PC-9 (cell line): ENCODE measurements at regions of chr12 and their contacts with region 1.

Region 1: GRCh38 chr12:12890815-12891645 is at the start of gene GPRC5A:
- DNase-seq: peak; percentile 96 to 100
- H3K4me3 ChIP-seq: peak within 1 kb of the TSS; percentile 86
- H3K27ac ChIP-seq: peak within 1 kb of the TSS; percentile 93
- H3K4me1 ChIP-seq: peaks cover 44% of the 10 kb centered on the region
- H3K27me3 ChIP-seq: no peaks in the 10 kb centered on the region
- CTCF ChIP-seq: no peak; the same call in 1 of the 2 replicates
- total RNA-seq, gene GPRC5A: 468 and 642 TPM in 2 replicates

Region 2: DNA sequence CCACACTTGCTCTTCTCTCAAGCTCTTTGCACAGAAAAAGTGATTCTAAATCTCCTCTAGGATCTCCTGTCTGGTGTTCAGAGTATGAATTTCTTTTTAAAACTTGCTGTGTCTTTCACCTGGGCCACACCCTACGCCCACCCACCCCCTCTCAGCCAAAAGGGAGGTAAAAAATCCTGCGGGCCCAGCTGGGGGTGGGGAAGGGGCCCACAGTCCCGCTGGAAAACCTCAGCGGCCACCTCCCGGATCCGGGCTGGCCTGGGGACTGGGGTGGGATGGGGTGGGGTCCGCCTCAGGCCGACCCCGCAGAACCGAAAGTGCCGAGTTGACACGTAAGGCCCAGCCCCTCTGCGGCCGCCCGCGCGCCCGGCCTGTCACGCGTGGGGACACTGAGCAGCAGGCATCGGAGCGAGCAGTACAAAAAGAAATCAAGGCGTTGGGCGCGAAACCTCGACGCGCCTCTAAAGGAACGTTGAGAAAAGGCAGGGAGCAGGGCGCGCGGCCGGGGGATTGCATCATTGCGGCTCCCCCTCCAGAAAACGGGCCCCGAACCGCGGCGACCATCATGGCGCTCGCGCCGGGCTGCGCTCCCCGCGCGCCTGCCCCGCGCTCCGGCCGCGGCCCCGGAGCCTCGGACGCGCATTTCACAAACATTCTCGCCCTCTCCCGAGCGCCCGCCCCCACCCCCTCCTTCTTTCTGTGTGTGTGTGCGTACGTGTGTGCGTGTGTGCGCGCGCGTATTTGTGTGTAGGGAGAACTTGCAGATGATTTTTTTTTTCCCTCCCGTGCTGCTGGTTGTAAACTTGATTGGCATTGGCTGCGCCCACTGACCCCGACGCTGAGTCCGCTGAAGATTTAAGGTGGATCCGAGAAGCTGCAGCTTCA is 166.1 kb before region 1 on chr12:
- CTCF ChIA-PET with region 1: interaction called, 3 read pairs
- POLR2A ChIA-PET with region 1: interaction called, 6 read pairs
- intact Hi-C with region 1: loop called (anchors 2 kb)
- DNase-seq: peak in 1 of 2 experiments; percentile 96
- H3K4me3 ChIP-seq: peak overlapping the region; percentile 96
- H3K27ac ChIP-seq: peak overlapping the region; percentile 98
- H3K4me1 ChIP-seq: peaks cover 31% of the 10 kb centered on the region
- H3K27me3 ChIP-seq: no peaks in the 10 kb centered on the region
- CTCF ChIP-seq: no peak

Region 3: DNA sequence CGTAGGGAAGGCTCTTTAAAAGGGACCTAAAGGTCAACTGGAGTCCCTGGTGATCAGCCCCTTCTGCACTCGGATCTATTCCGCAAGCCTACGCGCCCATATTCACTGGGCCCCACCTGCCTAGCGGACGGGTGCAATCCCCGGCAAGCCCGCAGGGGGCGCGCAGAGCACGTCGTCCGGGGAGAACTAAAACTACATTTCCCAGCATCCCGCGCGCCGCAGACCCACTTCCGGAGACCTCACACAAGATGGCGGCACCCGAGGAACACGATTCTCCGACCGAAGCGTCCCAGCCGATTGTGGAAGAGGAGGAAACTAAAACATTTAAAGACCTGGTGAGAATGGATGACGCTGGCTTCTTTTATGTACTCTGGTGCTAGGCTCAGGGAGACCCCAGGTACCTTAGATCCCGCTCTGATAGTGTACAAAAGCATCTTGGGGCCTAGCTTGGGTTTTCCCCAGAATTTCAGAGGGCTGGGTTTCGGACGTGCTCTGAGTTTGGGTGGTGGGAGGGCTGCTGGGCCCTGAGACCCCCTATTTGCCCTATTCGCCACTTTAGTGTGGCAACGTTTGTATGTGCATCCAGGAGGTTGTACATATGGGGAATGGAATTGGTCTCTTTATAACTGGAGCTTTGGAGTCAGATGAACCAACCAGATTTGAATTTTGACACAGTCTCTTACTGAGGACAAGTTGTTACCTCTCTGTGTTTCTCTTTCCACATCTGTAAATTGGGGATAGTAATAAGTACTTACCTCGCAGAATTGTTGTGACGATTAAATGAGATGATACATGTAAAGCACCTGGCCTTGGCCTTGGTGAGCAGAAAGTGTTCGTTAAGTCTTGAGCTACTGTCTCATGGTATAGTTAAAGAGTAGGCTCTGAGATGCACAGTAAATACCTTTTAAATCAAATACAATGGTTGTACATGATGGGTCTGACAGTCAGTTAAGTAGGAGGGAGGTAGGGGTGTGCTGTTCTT is 77.6 kb before region 1 on chr12 and contains the start of gene DDX47:
- CTCF ChIA-PET with region 1: interaction called, 9 read pairs
- POLR2A ChIA-PET with region 1: interaction called, 8 read pairs
- intact Hi-C with region 1: loop called (anchors 1 kb)
- DNase-seq: peak; percentile 81 to 98
- H3K4me3 ChIP-seq: peak within 1 kb of the TSS; percentile 67
- H3K27ac ChIP-seq: peak within 1 kb of the TSS; percentile 81
- H3K4me1 ChIP-seq: peaks cover 64% of the 10 kb centered on the region
- H3K27me3 ChIP-seq: no peaks in the 10 kb centered on the region
- CTCF ChIP-seq: peak; percentile 93
- total RNA-seq, gene DDX47: 192 and 196 TPM in 2 replicates

Region 4: GRCh38 chr12:12837025-12837872 is 53.8 kb before region 1 on chr12:
- CTCF ChIA-PET with region 1: interaction called, 21 read pairs
- POLR2A ChIA-PET with region 1: interaction called, 103 read pairs
- intact Hi-C with region 1: loop called (anchors 1 kb)
- DNase-seq: peak; percentile 74 to 85
- H3K4me3 ChIP-seq: no peak overlapping the region
- H3K27ac ChIP-seq: peak overlapping the region; percentile 99
- H3K4me1 ChIP-seq: peaks cover 97% of the 10 kb centered on the region
- H3K27me3 ChIP-seq: no peaks in the 10 kb centered on the region
- CTCF ChIP-seq: peak; percentile 80

Region 5: DNA sequence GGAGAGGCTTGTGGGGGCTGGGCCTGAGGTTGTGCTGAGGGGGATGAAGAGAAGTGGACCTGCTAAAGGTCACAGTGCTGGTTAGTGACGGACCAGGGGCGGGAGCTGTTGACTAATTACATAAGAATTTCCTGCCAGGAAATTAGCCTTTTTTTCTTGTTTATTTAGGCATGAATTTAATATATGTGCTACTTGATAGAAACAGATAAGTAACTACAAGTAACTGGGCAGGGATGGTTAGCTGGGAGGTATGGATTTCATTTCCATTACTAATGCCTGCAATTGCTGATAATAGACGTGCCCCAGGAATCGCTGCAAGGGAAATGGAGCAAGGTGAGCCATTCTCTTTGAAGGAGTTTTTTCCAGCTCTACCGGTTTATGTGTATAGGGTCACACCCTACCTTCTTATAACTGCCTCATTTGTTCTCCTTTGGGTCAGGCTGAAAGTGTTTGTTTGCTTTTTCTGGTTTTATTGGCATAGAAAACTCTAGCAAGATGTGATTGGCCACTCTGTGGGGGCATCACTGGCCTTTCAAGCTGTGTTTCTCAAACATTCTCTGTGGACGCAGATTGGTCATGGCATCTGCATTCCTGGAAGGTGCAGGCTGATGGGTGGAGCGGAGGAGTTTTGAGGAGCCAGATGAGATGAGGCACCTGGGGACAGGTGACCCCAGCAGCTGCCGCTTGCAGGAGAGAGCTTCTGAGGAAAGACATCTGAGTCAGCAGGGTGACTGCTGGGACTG is 18.7 kb before region 1 on chr12:
- CTCF ChIA-PET with region 1: interaction called, 5 read pairs
- POLR2A ChIA-PET with region 1: interaction called, 38 read pairs
- intact Hi-C with region 1: loop called (anchors 1 kb)
- DNase-seq: peak; percentile 96 to 100
- H3K4me3 ChIP-seq: no peak overlapping the region
- H3K27ac ChIP-seq: peak overlapping the region; percentile 97
- H3K4me1 ChIP-seq: peaks cover 65% of the 10 kb centered on the region
- H3K27me3 ChIP-seq: no peaks in the 10 kb centered on the region
- CTCF ChIP-seq: no peak

Region 6: GRCh38 chr12:13203034-13203922 is 312.2 kb after region 1 on chr12:
- CTCF ChIA-PET with region 1: no interaction called
- POLR2A ChIA-PET with region 1: interaction called, 20 read pairs
- intact Hi-C with region 1: loop called (anchors 5 kb)
- DNase-seq: peak in 1 of 2 experiments; percentile 83
- H3K4me3 ChIP-seq: peak overlapping the region; percentile 32; the same call in 1 of the 2 replicates
- H3K27ac ChIP-seq: peak overlapping the region; percentile 99
- H3K4me1 ChIP-seq: peaks cover 97% of the 10 kb centered on the region
- H3K27me3 ChIP-seq: no peaks in the 10 kb centered on the region
- CTCF ChIP-seq: no peak

Region 7: DNA sequence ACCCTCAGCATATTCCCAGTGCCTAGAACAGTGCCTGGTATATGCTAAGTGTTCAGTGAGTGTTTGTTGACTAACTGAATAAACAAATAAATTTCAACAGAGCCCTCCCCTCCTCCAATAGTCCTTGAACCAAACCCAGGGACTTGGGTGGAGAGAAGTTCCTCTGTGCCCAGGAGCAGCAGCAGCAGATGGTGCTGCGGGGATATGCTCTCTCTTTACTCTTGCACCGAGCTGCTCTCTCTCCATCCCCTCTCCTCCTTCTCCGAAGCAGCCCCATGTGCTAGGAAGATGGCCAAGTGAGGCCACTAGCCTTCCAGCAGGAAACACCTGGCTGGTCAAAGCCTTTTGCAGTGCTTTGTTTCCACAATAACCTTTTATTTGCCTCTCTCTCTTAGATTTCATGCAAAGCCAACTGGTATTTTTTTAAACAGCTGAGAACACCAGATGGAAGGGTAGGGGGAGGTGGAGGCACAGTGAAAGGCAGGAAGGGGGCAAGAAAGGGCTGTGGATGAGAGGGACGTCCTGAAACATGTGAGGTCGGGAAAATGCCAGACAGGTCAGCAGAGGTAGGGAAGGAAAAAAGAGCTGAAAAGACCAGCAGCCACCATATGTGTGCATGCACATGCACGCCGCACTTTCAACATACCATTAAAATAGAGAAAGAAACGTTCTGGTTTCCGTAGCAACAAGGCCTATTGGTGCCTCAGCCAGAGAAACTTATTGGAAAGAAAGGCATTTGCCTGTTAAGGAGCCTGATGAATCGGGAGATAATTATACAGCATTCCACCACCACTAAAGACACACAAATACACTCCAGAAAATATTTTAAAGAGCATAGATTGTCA is 384.4 kb after region 1 on chr12:
- CTCF ChIA-PET with region 1: no interaction called
- POLR2A ChIA-PET with region 1: no interaction called
- intact Hi-C with region 1: no loop called
- DNase-seq: no peak
- H3K4me3 ChIP-seq: no peak overlapping the region
- H3K27ac ChIP-seq: no peak overlapping the region
- H3K4me1 ChIP-seq: no peaks in the 10 kb centered on the region
- H3K27me3 ChIP-seq: no peaks in the 10 kb centered on the region
- CTCF ChIP-seq: no peak